ENCODE measurements at regions of chr13 and their contacts with region 1.

Region 1: GRCh38 chr13:45799451-45799850 is 52.1 kb downstream of the SIAH3 start:
- DNase-seq: no peak
- ATAC-seq: no peak
- H3K4me3 ChIP-seq: no peak overlapping the region
- H3K27ac ChIP-seq: no peak overlapping the region
- H3K4me1 ChIP-seq: no peaks in the 10 kb centered on the region
- H3K27me3 ChIP-seq: no peaks in the 10 kb centered on the region; the same call in 1 of the 2 replicates
- CTCF ChIP-seq: no peak

Region 2: DNA sequence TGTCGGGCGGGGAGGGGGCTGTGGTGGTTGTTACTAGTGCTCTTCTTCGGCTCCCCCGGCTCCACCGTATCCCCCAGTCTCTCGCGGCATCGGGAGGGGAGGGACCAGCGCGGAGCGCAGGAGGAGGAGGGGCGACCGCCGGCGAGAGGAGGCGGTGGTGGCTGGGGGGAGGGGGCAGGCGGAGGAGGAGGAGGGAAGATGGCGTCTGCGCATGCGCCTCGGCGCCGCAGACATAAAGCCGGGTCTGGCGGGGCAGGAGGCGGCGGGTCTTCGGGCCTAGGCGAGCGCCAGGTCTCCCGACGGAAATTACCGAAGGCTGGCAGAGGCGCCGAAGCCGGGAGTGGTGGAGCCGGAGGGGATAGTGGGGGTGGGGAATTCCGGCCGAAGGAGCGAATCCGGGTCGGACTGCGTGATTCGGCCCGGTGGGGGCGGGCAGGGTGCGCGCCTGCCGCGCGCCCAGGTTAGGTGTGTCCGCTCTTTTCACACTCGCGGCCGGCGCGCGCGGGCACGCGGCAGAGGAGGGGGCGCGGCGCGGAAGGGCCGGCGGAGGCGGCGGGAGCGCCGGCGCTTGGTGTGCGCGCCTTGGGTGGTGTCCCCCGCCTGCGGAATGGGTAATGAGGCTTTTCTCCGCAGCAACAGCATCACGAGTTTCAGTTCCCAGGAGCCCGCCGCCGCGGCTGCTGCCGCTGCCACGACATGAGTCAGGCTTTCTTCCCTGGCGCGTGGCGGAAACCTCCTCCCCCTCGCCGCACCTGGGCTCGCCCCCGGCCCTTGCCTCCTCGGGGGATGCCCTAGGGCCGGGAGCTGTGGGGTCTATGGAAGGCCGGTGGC is 1222.0 kb before region 1 on chr13:
- CTCF ChIA-PET with region 1: no interaction called
- POLR2A ChIA-PET with region 1: no interaction called
- in situ Hi-C with region 1: no loop called
- intact Hi-C with region 1: no loop called
- DNase-seq: peak; percentile 64
- ATAC-seq: peak; percentile 91
- H3K4me3 ChIP-seq: peak overlapping the region; percentile 68 to 70
- H3K27ac ChIP-seq: peak overlapping the region; percentile 90
- H3K4me1 ChIP-seq: peaks cover 24% of the 10 kb centered on the region
- H3K27me3 ChIP-seq: no peaks in the 10 kb centered on the region
- CTCF ChIP-seq: no peak

Region 3: GRCh38 chr13:46530084-46530935 is 730.9 kb after region 1 on chr13:
- CTCF ChIA-PET with region 1: no interaction called
- POLR2A ChIA-PET with region 1: no interaction called
- in situ Hi-C with region 1: no loop called
- intact Hi-C with region 1: loop called (anchors 10 kb)
- DNase-seq: no peak
- ATAC-seq: no peak
- H3K4me3 ChIP-seq: no peak overlapping the region
- H3K27ac ChIP-seq: no peak overlapping the region
- H3K4me1 ChIP-seq: no peaks in the 10 kb centered on the region
- H3K27me3 ChIP-seq: no peaks in the 10 kb centered on the region
- CTCF ChIP-seq: no peak

Measured in Panc1 (cell line).